HEK293T (cell line): ENCODE measurements at regions of chr16 and their contacts with region 1.

Region 1: GRCh38 chr16:4402439-4403132 is 13.8 kb downstream of the CORO7 start:
- DNase-seq: peak; percentile 90

Region 2: DNA sequence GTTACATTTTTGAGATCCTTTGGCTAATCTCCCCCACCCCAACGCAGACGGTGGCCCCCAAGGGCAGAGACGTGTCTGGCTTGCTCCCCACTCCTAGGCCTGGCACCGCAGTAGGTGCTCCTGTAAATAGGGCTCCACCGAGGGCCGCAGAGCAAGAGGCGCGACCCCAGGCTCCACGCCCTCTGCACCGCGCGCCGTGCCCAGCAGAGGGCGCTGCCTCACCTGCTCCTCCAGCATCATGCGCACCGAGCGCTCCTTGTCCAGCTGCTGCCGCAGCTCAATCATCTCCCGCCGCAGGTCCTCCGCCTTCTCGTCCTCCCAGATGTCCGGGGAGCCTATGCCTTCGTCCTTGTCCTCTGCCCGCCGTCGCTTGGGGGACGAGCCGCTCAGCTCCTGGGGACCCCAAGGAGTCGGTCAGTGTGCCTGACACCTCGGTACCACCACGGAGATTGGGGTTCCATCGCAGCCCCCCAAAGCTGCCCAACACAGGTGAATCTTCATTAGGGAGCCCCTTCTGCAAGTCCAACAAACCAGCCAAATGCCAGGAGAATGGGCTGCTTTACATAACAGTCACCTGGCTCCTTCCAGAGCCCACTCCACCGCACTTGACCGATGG is 140.9 kb before region 1 on chr16:
- CTCF ChIA-PET with region 1: interaction called, 11 read pairs
- POLR2A ChIA-PET with region 1: no interaction called
- DNase-seq: peak; percentile 71

Region 3: DNA sequence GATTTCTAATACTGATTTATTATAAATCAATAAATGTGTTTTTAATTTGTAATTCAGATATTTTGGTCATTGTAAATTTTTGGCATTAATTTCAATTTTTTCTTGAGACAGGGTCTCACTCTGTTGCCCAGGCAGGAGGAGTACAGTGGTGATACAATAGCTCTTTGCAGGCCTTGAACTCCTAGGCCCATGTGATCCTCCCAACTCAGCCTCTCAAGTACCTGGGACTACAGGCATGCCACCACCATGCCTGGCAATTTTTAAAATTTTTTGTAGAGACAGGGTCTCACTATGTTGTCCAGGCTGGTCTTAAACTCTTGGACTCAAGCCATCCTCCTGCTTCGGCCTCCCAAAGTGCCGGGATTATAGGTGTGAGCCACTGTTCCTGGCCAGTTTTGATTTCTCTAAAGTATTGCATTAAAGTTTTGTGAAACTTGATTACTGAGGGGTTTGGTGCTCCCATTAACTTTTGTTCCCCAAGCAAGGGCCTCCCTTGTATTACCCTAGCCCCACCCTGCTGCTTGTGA is 124.5 kb before region 1 on chr16:
- CTCF ChIA-PET with region 1: no interaction called
- POLR2A ChIA-PET with region 1: no interaction called
- DNase-seq: no peak

Region 4: GRCh38 chr16:4323845-4324478 is 78.6 kb before region 1 on chr16:
- CTCF ChIA-PET with region 1: no interaction called
- POLR2A ChIA-PET with region 1: no interaction called
- DNase-seq: peak; percentile 64

Region 5: GRCh38 chr16:4350787-4351659 is 51.6 kb before region 1 on chr16 and contains the start of gene PAM16:
- CTCF ChIA-PET with region 1: interaction called, 23 read pairs
- POLR2A ChIA-PET with region 1: interaction called, 3 read pairs
- DNase-seq: peak; percentile 98

Region 6: GRCh38 chr16:4358831-4359561 is 43.6 kb before region 1 on chr16:
- CTCF ChIA-PET with region 1: interaction called, 48 read pairs
- POLR2A ChIA-PET with region 1: no interaction called
- DNase-seq: peak; percentile 70

Region 7: DNA sequence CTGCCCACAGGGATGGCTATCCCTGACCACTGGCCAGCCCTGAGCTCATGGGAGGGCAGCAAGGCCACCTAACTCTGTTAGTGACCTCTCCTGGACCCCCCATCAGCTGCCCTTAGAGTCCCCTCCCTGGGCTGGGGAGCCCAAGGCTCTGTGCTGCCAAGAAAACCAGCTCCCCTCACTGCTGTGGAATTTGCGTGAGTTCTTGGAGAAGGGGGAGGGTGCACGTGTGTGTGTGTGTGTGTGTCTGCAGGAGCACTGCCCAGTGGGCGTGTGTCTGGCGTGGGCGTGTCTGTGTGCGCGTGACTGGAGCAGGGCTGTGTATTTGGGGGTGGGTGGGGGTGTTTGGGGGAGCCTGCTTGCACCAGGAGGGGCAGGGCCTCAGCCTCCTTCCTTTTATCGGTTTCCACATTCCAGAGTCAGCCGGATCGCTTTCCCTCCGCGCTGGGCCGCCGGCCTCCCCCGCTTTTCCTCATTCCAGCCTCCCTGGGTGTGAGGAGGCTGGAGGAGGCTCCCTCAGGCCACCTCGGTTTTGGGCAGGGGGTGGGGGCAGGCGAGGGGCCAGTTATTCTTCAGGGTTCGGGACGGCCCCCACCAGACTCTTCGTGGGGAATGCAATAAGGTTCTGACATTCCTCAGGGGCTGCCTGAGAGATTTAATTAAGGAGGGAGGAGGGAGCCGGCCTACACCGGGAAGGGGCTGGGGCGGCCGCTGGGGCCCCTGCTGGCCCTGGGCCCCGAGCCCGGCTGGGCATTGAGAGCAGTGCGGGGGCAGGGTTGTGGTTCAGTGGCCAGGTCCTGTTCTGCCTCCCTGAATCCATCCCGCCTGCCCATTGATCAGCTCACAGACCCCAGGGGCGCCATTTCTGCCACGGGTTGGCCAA is 28.5 kb before region 1 on chr16:
- CTCF ChIA-PET with region 1: interaction called, 19 read pairs
- POLR2A ChIA-PET with region 1: interaction called, 3 read pairs
- DNase-seq: no peak

Region 8: DNA sequence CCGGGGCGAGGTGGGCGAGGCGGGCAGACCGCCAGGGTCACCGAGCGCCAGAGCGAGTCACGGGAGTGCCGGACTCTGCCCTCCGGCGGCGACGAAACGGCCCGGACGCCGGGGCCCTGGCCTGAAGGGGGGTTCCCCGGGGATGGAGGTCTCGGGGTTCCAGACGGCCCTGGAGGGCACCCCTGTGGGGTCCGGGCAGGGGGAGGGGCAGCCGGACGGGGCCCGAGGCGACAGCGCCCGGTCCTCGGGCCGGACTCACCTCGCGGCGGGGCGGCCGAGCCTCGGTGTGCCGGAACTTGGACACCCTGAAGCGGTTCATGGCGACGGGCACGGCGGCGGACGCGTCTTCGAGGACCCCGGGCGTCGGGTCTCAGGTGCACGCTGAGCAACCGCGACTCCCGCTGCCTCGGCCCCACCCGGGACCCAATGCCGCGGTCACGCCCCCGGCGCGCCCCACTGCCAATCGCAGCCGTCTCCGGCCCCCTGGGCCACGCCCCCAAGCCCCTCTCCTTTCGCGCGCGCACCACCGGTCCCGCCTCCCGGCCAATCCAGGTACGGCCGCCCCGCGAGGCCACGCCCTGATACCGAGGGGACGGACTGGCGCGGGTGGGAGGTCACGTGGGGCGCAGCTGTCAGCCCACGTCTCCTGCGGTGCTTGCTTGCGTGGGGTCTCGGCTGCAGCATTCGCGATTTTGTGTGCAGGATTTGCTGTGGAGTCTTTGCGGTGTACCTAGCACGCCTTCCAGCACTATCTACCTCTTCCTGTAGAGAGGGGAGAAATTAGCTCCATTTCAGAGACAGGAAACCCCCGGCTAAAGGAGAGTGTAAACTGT is 13.8 kb after region 1 on chr16 and contains the start of gene CORO7:
- CTCF ChIA-PET with region 1: interaction called, 54 read pairs
- POLR2A ChIA-PET with region 1: interaction called, 5 read pairs
- DNase-seq: peak; percentile 97